ENCODE measurements at regions of chr9 and their contacts with region 1.

Region 1: DNA sequence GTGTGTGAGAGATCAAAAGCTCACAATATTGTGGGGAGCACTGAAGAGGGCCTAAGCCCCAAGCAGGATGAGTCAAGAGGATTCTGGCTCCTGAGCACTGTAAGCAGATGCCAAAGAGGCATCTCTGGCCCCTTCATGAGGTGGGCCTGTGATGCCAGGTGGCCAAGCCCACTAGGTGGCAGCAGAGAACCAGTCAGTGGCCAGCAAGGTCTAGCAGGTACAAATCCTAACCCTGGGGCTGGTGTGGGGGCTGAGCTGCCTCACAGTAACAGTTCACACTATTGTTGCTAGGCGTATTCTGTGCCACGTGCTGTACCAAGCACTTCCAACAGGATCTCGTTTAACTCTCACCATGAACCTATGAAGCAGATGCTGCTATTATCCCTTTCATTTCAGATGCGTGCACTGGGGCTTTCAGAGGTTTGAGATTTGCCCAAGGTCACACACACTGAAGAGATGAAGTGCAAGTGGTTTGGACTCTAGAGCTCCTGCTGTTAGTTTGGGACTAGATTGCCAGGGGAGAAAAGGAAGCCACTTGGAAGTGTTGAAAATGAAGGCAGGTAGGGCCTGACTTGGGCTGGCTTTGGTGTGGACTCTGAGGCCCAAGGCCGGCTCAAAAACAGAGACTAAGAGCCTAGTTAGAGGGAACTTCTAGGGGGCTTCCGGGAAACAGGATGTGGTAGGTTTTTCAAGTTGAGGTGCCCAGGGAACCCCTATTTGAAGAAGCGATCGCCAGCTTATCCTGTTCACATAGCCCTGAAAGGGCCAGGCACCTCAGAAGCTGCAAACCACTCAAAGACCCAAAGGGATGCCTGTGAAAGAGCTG is 4.4 kb upstream of the MLANA start:
- DNase-seq: peak; percentile 78
- H3K4me3 Mint-ChIP-seq: no peak overlapping the region
- H3K27ac Mint-ChIP-seq: no peak overlapping the region
- H3K4me1 Mint-ChIP-seq: peaks cover 7% of the 10 kb centered on the region
- H3K27me3 Mint-ChIP-seq: peaks cover 16% of the 10 kb centered on the region
- CTCF ChIP-seq: peak; percentile 93

Region 2: DNA sequence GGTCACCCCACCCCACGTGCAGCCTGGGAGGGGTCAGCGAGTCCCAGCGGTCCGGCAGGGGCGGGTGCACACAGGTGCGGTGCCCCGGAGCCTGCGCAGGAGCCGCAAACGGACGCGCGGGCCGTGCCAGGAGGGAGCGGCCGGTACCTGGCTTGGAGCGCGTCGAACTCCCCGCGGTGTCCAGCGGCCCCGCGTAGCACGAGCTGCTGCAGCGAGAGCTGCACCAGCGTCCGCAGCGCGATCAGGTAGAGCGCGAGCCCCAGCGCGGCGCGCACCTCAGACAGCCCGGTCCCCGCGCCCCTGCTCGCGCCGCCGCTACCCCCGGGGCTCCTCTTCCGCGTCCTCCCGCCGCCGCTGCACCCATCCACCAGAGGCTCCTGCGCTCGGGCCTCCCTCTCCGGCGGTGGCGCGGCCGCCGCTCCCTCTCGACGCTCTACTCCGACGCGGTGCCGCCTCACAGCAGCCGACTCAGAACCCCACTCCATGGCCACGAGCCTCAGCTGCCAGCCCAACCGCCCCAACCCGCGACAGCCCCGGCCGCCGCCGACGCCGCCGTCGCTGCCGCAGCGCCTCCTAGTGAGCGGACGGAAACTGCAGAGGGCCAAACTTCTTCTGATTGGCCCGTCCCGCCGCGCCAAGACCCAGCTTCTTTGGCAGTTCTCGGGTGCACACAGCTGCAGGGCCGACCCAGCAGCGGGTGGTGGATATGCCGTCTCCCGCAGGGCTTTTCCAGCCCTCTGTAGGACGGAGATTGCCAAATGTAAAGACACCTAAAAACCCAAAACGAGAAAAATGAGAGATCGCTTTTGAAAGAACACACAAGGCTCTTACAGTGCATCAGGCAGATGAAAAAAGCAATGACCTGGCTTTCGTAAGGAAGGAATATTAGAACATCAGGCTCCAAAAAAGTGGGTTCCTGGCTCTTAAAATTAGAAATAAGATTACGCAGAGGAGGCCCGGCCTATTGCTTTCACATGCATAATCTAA is 53.5 kb before region 1 on chr9 and contains the start of gene ERMP1:
- CTCF ChIA-PET with region 1: interaction called, 36 read pairs
- POLR2A ChIA-PET with region 1: no interaction called
- intact Hi-C with region 1: no loop called
- DNase-seq: peak; percentile 84
- H3K4me3 Mint-ChIP-seq: peak within 1 kb of the TSS; percentile 76
- H3K27ac Mint-ChIP-seq: no peak within 1 kb of the TSS
- H3K4me1 Mint-ChIP-seq: peaks cover 10% of the 10 kb centered on the region
- H3K27me3 Mint-ChIP-seq: no peaks in the 10 kb centered on the region
- CTCF ChIP-seq: peak; percentile 89
- total RNA-seq, gene ERMP1: 13.6 and 17.2 TPM in 2 replicates

Region 3: DNA sequence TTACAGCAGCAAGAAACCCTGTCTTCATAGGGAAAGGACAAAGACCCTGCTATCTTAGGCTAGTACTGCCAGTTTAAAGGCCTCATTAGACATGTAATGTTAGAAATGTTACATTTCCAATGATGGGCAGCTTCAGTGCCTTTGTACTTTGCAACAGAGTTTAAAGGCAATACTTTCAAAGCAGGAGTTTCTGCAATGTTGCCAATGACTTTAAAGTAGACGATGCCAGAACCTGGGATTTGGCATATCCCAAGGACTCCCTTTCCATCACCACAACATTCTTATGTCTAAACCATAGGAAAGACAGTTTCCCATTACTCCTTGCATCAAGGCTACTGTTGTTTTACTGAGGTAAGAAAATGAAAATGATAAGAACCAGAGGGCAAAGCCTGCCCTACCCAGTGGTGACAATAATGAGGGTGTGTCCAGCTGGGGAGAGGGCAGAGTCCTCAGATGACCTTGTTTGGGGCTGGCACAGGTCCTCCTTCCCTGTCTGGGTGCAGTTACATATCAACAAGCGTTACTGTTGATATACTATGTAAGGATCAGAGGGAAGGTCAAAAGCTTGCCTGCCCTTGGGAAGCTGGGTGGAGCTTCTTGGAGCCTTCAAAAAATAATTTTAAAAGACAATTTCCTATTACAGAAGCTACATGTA is 23.1 kb before region 1 on chr9:
- CTCF ChIA-PET with region 1: interaction called, 28 read pairs
- POLR2A ChIA-PET with region 1: interaction called, 3 read pairs
- intact Hi-C with region 1: no loop called
- DNase-seq: no peak
- H3K4me3 Mint-ChIP-seq: no peak overlapping the region
- H3K27ac Mint-ChIP-seq: no peak overlapping the region
- H3K4me1 Mint-ChIP-seq: no peaks in the 10 kb centered on the region
- H3K27me3 Mint-ChIP-seq: no peaks in the 10 kb centered on the region
- CTCF ChIP-seq: no peak

Region 4: GRCh38 chr9:5909976-5910375 is 23.6 kb after region 1 on chr9:
- CTCF ChIA-PET with region 1: interaction called, 20 read pairs
- POLR2A ChIA-PET with region 1: interaction called, 3 read pairs
- intact Hi-C with region 1: no loop called
- DNase-seq: peak; percentile 8
- H3K4me3 Mint-ChIP-seq: no peak overlapping the region
- H3K27ac Mint-ChIP-seq: peak overlapping the region; percentile 46
- H3K4me1 Mint-ChIP-seq: peaks cover 17% of the 10 kb centered on the region
- H3K27me3 Mint-ChIP-seq: no peaks in the 10 kb centered on the region
- CTCF ChIP-seq: no peak

Region 5: GRCh38 chr9:6015278-6016157 is 129.2 kb after region 1 on chr9 and contains the start of gene RANBP6:
- CTCF ChIA-PET with region 1: interaction called, 10 read pairs
- POLR2A ChIA-PET with region 1: no interaction called
- intact Hi-C with region 1: loop called (anchors 1 kb)
- DNase-seq: peak; percentile 85
- H3K4me3 Mint-ChIP-seq: peak within 1 kb of the TSS; percentile 99
- H3K27ac Mint-ChIP-seq: peak within 1 kb of the TSS; percentile 93
- H3K4me1 Mint-ChIP-seq: peaks cover 31% of the 10 kb centered on the region
- H3K27me3 Mint-ChIP-seq: no peaks in the 10 kb centered on the region
- CTCF ChIP-seq: no peak
- total RNA-seq, gene RANBP6: 13.9 and 18.2 TPM in 2 replicates

Region 6: GRCh38 chr9:6106576-6107339 is 220.4 kb after region 1 on chr9:
- CTCF ChIA-PET with region 1: no interaction called
- POLR2A ChIA-PET with region 1: no interaction called
- intact Hi-C with region 1: loop called (anchors 5 kb)
- DNase-seq: peak; percentile 61
- H3K4me3 Mint-ChIP-seq: no peak overlapping the region
- H3K27ac Mint-ChIP-seq: no peak overlapping the region
- H3K4me1 Mint-ChIP-seq: peaks cover 35% of the 10 kb centered on the region
- H3K27me3 Mint-ChIP-seq: no peaks in the 10 kb centered on the region
- CTCF ChIP-seq: peak; percentile 40

Region 7: GRCh38 chr9:7289773-7290172 is 1403.4 kb after region 1 on chr9:
- CTCF ChIA-PET with region 1: no interaction called
- POLR2A ChIA-PET with region 1: no interaction called
- intact Hi-C with region 1: no loop called
- DNase-seq: no peak
- H3K4me3 Mint-ChIP-seq: no peak overlapping the region
- H3K27ac Mint-ChIP-seq: no peak overlapping the region
- H3K4me1 Mint-ChIP-seq: no peaks in the 10 kb centered on the region
- H3K27me3 Mint-ChIP-seq: peaks cover 50% of the 10 kb centered on the region
- CTCF ChIP-seq: no peak